ENCODE measurements at regions of chr1 and their contacts with region 1.

Region 1: GRCh38 chr1:237799762-237800474 is 90.8 kb downstream of the ZP4 start:
- DNase-seq: peak; percentile 77
- H3K4me3 ChIP-seq: no peak overlapping the region
- H3K27ac ChIP-seq: no peak overlapping the region
- H3K4me1 ChIP-seq: no peaks in the 10 kb centered on the region
- H3K27me3 ChIP-seq: no peaks in the 10 kb centered on the region
- CTCF ChIP-seq: peak; percentile 64 to 72

Region 2: DNA sequence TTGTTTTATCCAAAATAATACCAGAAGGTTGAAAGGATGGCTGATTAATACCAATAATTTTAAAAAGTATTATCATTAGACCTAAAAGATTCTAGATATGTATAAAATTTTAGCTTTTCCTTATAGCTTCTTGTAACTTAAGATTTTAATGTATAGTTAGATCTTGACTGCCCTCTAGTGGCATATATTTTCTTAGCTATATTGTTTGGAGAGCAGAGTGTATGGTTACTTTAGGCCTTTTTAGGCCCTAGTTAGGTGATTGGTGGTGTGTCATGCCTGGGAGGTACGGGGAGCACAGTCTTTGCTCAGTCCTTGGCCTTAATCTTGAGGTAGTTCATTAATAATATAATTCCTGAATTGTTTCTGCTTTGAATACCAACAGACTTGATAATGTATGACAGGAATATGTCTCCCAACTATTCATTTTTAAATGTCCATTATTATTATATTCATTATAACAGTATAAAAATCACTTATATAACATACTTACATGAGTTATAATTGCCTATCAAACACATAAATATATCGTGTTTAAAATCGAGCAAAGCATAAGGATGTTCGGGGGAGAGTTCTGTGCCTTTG is 237.6 kb before region 1 on chr1:
- CTCF ChIA-PET with region 1: no interaction called
- dilution Hi-C with region 1: no loop called
- in situ Hi-C with region 1: no loop called
- intact Hi-C with region 1: loop called (anchors 10 kb)
- DNase-seq: peak; percentile 66
- H3K4me3 ChIP-seq: no peak overlapping the region
- H3K27ac ChIP-seq: no peak overlapping the region
- H3K4me1 ChIP-seq: no peaks in the 10 kb centered on the region
- H3K27me3 ChIP-seq: no peaks in the 10 kb centered on the region
- CTCF ChIP-seq: peak; percentile 58 to 78

Region 3: DNA sequence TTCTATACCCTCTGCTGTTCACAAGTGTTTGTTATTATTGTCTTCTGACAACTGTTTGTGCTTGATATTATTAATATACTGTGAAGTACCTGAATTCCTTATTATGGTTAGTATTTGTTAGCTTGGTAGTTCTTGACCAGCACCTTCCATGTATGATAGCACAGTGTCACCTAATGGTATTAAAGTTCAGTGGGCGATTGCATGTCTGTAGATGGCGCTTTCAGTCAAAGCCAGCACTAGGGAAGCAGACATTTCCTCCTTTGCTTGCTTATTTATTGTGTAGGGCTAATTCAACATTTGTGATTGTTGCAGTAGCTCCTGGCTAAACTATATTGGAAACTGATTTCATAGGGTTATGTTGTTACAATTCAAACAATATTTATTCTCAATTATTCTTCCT is 127.2 kb before region 1 on chr1:
- CTCF ChIA-PET with region 1: interaction called, 7 read pairs
- dilution Hi-C with region 1: no loop called
- in situ Hi-C with region 1: no loop called
- intact Hi-C with region 1: loop called (anchors 5 kb)
- DNase-seq: peak; percentile 4
- H3K4me3 ChIP-seq: no peak overlapping the region
- H3K27ac ChIP-seq: no peak overlapping the region
- H3K4me1 ChIP-seq: no peaks in the 10 kb centered on the region
- H3K27me3 ChIP-seq: no peaks in the 10 kb centered on the region
- CTCF ChIP-seq: peak in 1 of 2 donors; percentile 53

Measured in mammary epithelial cell (primary cell).